Naive thymus-derived CD4-positive, alpha-beta T cell (primary cell): ENCODE measurements at regions of chr11 and their contacts with region 1.

Region 1: DNA sequence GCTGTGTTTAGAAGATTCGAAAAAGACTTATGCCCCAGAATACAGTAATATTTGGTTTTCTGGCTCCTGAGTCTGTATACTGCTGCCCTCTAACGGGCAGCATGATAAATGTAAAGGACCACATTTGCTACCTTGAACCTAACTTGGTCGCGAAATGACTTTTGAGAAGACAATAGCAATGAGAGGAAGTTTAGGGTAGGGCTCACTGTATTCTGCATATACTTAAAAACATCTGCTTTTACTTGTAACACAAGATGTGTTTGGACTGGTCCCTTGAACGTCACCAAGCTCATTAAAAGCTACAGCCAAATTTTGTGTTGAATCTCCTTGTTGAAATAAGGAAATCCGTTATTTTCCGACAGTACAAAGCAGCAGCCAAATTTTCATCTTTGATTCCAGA is 309.1 kb downstream of the SWAP70 start:
- DNase-seq: peak in 5 of 9 donors; percentile 10 to 42 (median 24)
- ATAC-seq: peak; percentile 72
- H3K4me3 ChIP-seq: no peak overlapping the region
- H3K4me3 Mint-ChIP-seq: no peak overlapping the region
- H3K27ac ChIP-seq: no peak overlapping the region
- H3K27ac Mint-ChIP-seq: no peak overlapping the region
- H3K4me1 ChIP-seq: no peaks in the 10 kb centered on the region
- H3K4me1 Mint-ChIP-seq: peaks cover 0 to 2% (median 0%) of the 10 kb centered on the region in 7 donors
- H3K27me3 ChIP-seq: no peaks in the 10 kb centered on the region
- H3K27me3 Mint-ChIP-seq: no peaks in the 10 kb centered on the region

Region 2: GRCh38 chr11:9534791-9535781 is 437.9 kb before region 1 on chr11:
- CTCF ChIA-PET with region 1: no interaction called
- POLR2A ChIA-PET with region 1: no interaction called
- intact Hi-C with region 1: loop called in 1 of 2 experiments (anchors 10 kb)
- DNase-seq: peak; percentile 34 to 83 (median 62)
- ATAC-seq: peak; percentile 84
- H3K4me3 ChIP-seq: no peak overlapping the region
- H3K4me3 Mint-ChIP-seq: no peak overlapping the region
- H3K27ac ChIP-seq: no peak overlapping the region
- H3K27ac Mint-ChIP-seq: no peak overlapping the region
- H3K4me1 ChIP-seq: no peaks in the 10 kb centered on the region
- H3K4me1 Mint-ChIP-seq: no peaks in the 10 kb centered on the region
- H3K27me3 ChIP-seq: no peaks in the 10 kb centered on the region
- H3K27me3 Mint-ChIP-seq: no peaks in the 10 kb centered on the region

Region 3: DNA sequence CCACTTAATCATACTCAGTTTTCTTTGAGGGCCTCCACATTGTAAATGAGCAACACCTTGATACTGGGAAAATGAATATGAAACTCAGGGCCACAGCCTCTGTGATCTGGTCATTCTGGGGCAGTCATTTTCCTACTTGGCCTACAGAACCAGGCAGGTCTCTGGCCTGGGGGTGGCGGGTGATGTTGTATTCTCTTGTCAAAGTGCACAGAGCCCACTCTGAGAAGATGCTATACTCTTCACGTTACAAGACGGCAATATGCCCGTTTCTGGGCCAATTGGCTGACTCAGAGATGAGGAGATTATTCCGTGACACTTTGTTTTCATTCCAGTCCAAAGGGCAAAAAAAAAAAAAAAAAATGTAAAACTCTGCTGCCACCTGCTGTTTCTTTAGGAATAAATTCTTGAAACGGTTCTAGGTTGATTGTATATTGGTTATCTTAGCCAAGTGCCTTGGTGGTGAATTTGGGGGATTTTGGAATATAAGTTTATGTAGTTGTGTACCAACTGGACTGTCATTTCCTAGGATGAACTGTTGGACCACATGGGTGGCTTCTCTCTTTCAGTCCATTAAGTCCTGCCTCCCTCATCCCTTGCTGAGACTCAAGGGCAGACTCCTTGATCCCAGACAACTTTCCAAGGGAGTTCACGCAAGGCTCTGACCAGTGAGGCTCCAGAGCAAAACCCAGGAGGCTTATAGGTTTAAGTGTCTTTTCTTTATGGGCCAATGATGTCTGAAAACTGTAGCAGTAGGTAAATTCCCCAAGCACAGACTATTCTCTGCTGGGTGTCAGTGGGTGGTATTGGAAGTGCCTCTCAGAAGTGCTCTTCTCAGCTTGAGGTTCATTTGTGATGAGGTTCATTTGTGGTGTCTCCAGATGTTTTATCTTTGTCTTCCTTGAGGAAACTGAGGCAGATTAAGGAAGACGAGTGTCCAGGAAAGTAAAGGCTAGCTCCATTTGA is 350.1 kb after region 1 on chr11:
- CTCF ChIA-PET with region 1: interaction called, 3 read pairs
- POLR2A ChIA-PET with region 1: no interaction called
- intact Hi-C with region 1: loop called (anchors 1 to 5 kb)
- DNase-seq: peak in 8 of 9 donors; percentile 10 to 70 (median 48)
- ATAC-seq: peak; percentile 70
- H3K4me3 ChIP-seq: no peak overlapping the region
- H3K4me3 Mint-ChIP-seq: peak overlapping the region in 1 of 10 donors; percentile 26
- H3K27ac ChIP-seq: no peak overlapping the region
- H3K27ac Mint-ChIP-seq: peak overlapping the region in 5 of 9 donors; percentile 16 to 82 (median 55)
- H3K4me1 ChIP-seq: no peaks in the 10 kb centered on the region
- H3K4me1 Mint-ChIP-seq: peaks cover 0 to 11% (median 3%) of the 10 kb centered on the region in 7 donors
- H3K27me3 ChIP-seq: no peaks in the 10 kb centered on the region
- H3K27me3 Mint-ChIP-seq: peaks cover 4 to 20% (median 8%) of the 10 kb centered on the region in 5 donors